CD14-positive monocyte (primary cell): ENCODE measurements at regions of chrX and their contacts with region 1.

Region 1: GRCh38 chrX:118459494-118459893 is 36.1 kb upstream of the DOCK11 start:
- DNase-seq: peak in 2 of 3 donors; percentile 1 to 10
- H3K4me3 ChIP-seq: no peak overlapping the region
- H3K4me3 Mint-ChIP-seq: no peak overlapping the region
- H3K27ac ChIP-seq: no peak overlapping the region
- H3K27ac Mint-ChIP-seq: no peak overlapping the region
- H3K4me1 ChIP-seq: peaks cover 0 to 4% of the 10 kb centered on the region in 2 donors
- H3K4me1 Mint-ChIP-seq: peaks cover 8% of the 10 kb centered on the region
- H3K27me3 ChIP-seq: no peaks in the 10 kb centered on the region
- H3K27me3 Mint-ChIP-seq: peaks cover 0 to 4% (median 0%) of the 10 kb centered on the region in 3 donors
- CTCF ChIP-seq: peak; percentile 55

Region 2: DNA sequence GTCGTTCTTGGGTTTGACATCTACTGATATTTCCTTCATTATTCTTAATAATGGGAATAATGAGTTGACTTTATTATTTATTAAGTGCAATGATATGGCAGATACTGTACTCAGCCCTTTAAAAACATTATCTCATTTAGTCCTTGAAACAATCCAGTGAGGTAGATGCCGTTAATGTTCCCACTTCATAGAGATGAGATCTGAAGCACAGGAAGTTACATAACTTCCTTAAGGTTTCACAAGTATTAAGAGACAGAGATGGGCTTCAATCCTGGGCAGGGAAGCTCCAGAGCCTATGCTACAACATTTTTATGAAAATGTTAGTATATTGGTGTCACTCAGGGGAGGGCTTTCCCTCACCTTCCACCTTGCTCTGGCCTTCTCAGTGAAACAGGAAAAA is 333.2 kb before region 1 on chrX:
- intact Hi-C with region 1: no loop called
- DNase-seq: peak in 1 of 3 donors; percentile 5
- H3K4me3 ChIP-seq: no peak overlapping the region
- H3K4me3 Mint-ChIP-seq: no peak overlapping the region
- H3K27ac ChIP-seq: no peak overlapping the region
- H3K27ac Mint-ChIP-seq: no peak overlapping the region
- H3K4me1 ChIP-seq: peaks cover 9 to 13% of the 10 kb centered on the region in 2 donors
- H3K4me1 Mint-ChIP-seq: peaks cover 9% of the 10 kb centered on the region
- H3K27me3 ChIP-seq: no peaks in the 10 kb centered on the region
- H3K27me3 Mint-ChIP-seq: peaks cover 0 to 2% (median 1%) of the 10 kb centered on the region in 3 donors
- CTCF ChIP-seq: no peak

Region 3: DNA sequence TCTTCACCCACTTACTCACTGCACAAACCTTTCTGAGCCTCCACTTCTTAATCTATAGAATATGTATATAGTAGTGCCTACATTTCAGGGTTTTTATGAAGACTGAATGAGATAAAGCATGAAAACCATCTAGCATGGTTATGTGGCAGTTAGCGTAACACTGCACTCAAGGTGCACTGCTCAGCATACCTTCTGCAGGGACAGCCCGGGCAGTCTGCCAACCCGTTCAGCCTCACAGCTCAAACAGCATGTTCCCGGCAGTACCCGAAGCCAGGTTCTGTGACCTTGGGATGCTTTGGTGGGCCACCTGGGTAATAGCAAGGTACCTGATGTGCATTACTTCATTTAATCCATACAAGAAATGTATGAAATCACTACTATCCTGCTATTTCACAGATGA is 117.5 kb after region 1 on chrX:
- intact Hi-C with region 1: loop called in 1 of 2 experiments (anchors 10 kb)
- DNase-seq: no peak
- H3K4me3 ChIP-seq: no peak overlapping the region
- H3K4me3 Mint-ChIP-seq: no peak overlapping the region
- H3K27ac ChIP-seq: no peak overlapping the region
- H3K27ac Mint-ChIP-seq: no peak overlapping the region
- H3K4me1 ChIP-seq: no peaks in the 10 kb centered on the region
- H3K4me1 Mint-ChIP-seq: no peaks in the 10 kb centered on the region
- H3K27me3 ChIP-seq: no peaks in the 10 kb centered on the region
- H3K27me3 Mint-ChIP-seq: peaks cover 0 to 4% (median 0%) of the 10 kb centered on the region in 3 donors
- CTCF ChIP-seq: no peak

Region 4: DNA sequence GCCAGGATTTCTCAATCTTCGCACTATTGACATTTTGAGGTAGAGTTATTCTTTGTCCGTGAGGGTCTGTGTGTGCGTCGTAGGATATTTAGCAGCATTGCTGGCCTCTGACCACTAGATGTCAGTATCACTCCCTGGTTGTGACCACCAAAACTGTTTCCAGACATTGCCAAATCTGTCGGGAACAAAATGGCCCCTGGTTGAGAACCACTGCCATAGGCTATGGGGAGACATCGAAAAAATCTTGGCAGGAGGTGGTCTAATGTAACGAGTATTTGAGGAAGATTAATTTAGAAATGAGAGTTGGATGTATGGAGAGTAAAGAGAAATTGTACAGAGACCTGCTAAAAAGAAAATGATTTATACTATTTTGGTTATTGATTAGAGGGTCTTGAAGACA is 144.5 kb after region 1 on chrX:
- intact Hi-C with region 1: loop called in 1 of 2 experiments (anchors 5 kb)
- DNase-seq: peak; percentile 21 to 53 (median 43)
- H3K4me3 ChIP-seq: no peak overlapping the region
- H3K4me3 Mint-ChIP-seq: no peak overlapping the region
- H3K27ac ChIP-seq: no peak overlapping the region
- H3K27ac Mint-ChIP-seq: peak overlapping the region in 1 of 7 donors; percentile 48
- H3K4me1 ChIP-seq: no peaks in the 10 kb centered on the region
- H3K4me1 Mint-ChIP-seq: peaks cover 6% of the 10 kb centered on the region
- H3K27me3 ChIP-seq: no peaks in the 10 kb centered on the region
- H3K27me3 Mint-ChIP-seq: no peaks in the 10 kb centered on the region
- CTCF ChIP-seq: peak; percentile 72